CD4-positive, alpha-beta memory T cell (primary cell): ENCODE measurements at regions of chrX and their contacts with region 1.

Region 1: GRCh38 chrX:129726307-129727111 is 12.3 kb upstream of the XPNPEP2 start:
- DNase-seq: peak in 2 of 5 donors; percentile 18 to 24
- H3K4me3 ChIP-seq: no peak overlapping the region
- H3K4me3 Mint-ChIP-seq: no peak overlapping the region
- H3K27ac ChIP-seq: no peak overlapping the region
- H3K27ac Mint-ChIP-seq: peak overlapping the region in 2 of 7 donors; percentile 50 to 73
- H3K4me1 ChIP-seq: peaks cover 26% of the 10 kb centered on the region
- H3K4me1 Mint-ChIP-seq: peaks cover 27 to 46% (median 34%) of the 10 kb centered on the region in 4 donors
- H3K27me3 ChIP-seq: no peaks in the 10 kb centered on the region
- H3K27me3 Mint-ChIP-seq: no peaks in the 10 kb centered on the region

Region 2: GRCh38 chrX:129577473-129577872 is 149.0 kb before region 1 on chrX:
- CTCF ChIA-PET with region 1: no interaction called
- POLR2A ChIA-PET with region 1: no interaction called
- intact Hi-C with region 1: no loop called
- DNase-seq: no peak
- H3K4me3 ChIP-seq: no peak overlapping the region
- H3K4me3 Mint-ChIP-seq: no peak overlapping the region
- H3K27ac ChIP-seq: no peak overlapping the region
- H3K27ac Mint-ChIP-seq: no peak overlapping the region
- H3K4me1 ChIP-seq: no peaks in the 10 kb centered on the region
- H3K4me1 Mint-ChIP-seq: no peaks in the 10 kb centered on the region
- H3K27me3 ChIP-seq: no peaks in the 10 kb centered on the region
- H3K27me3 Mint-ChIP-seq: no peaks in the 10 kb centered on the region

Region 3: GRCh38 chrX:129606918-129607317 is 119.6 kb before region 1 on chrX:
- CTCF ChIA-PET with region 1: interaction called, 12 read pairs
- POLR2A ChIA-PET with region 1: no interaction called
- intact Hi-C with region 1: loop called (anchors 1 kb)
- DNase-seq: peak; percentile 48 to 65 (median 58)
- H3K4me3 ChIP-seq: no peak overlapping the region
- H3K4me3 Mint-ChIP-seq: peak overlapping the region in 1 of 8 donors; percentile 39
- H3K27ac ChIP-seq: no peak overlapping the region
- H3K27ac Mint-ChIP-seq: peak overlapping the region in 1 of 7 donors; percentile 50
- H3K4me1 ChIP-seq: peaks cover 12% of the 10 kb centered on the region
- H3K4me1 Mint-ChIP-seq: peaks cover 2 to 25% (median 18%) of the 10 kb centered on the region in 4 donors
- H3K27me3 ChIP-seq: no peaks in the 10 kb centered on the region
- H3K27me3 Mint-ChIP-seq: no peaks in the 10 kb centered on the region

Region 4: DNA sequence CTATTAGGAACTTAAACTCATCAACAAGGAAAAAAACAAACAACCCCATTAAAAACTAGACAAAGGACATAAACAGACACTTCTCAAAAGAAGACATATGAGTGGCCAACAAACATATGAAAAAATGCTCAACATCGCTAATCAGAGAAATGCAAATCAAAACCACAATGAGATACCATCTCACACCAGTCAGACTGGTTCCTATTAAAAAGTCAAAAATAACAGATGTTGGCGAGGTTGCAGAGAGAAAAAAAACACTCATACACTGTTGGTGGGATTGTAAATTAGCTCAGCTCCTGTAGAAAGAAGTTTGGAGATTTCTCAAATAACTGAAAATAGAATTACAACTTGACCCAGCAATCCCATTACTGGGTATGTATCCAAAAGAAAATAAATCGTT is 100.5 kb before region 1 on chrX:
- CTCF ChIA-PET with region 1: no interaction called
- POLR2A ChIA-PET with region 1: no interaction called
- intact Hi-C with region 1: no loop called
- DNase-seq: no peak
- H3K4me3 ChIP-seq: no peak overlapping the region
- H3K4me3 Mint-ChIP-seq: no peak overlapping the region
- H3K27ac ChIP-seq: no peak overlapping the region
- H3K27ac Mint-ChIP-seq: no peak overlapping the region
- H3K4me1 ChIP-seq: no peaks in the 10 kb centered on the region
- H3K4me1 Mint-ChIP-seq: peaks cover 5 to 10% (median 7%) of the 10 kb centered on the region in 4 donors
- H3K27me3 ChIP-seq: no peaks in the 10 kb centered on the region
- H3K27me3 Mint-ChIP-seq: peaks cover 0 to 2% of the 10 kb centered on the region in 2 donors

Region 5: DNA sequence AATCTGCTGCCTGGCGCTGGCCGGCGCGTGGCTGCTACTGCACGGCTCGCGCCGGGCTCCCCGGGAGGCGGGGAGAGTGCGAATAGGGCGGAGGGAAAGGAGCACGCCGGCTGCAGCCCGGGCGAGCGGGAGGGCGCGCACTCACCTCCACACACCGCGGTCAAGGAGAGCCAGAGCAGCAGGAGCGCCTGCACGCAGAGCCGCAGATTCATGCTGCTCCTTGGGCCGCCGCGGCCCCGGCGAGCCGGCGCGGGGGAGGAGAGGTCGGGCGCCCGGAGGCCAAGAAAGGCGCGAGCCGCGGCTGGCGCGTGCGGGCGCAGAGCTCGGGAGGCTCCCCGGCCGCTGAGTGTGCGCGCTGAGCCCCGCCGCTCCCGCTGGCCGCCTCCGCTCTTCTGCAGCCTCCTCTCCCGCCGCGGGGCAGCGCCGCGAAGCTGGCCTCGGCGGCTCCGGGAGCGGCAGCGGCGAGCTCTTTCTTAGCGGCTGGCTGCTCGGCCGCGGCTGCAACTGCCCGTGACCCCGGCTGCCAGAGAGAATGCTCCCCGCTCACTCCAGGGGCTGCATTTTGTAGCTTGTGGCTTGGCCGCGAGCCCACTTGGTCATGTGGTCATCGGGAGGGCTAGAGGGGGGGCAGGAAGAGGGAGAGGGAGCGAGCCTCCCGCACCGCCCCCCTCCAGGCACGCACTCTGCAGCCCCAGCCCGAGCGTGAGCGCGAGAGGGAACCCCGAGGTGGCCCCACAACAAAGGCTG is 71.9 kb before region 1 on chrX and contains the start of gene APLN:
- CTCF ChIA-PET with region 1: interaction called, 9 read pairs
- POLR2A ChIA-PET with region 1: no interaction called
- intact Hi-C with region 1: loop called (anchors 5 kb)
- DNase-seq: peak in 3 of 5 donors; percentile 11 to 16 (median 14)
- H3K4me3 ChIP-seq: no peak within 1 kb of the TSS
- H3K4me3 Mint-ChIP-seq: peak within 1 kb of the TSS; percentile 53 to 76 (median 74)
- H3K27ac ChIP-seq: no peak within 1 kb of the TSS
- H3K27ac Mint-ChIP-seq: no peak within 1 kb of the TSS
- H3K4me1 ChIP-seq: peaks cover 10% of the 10 kb centered on the region
- H3K4me1 Mint-ChIP-seq: peaks cover 3 to 9% (median 6%) of the 10 kb centered on the region in 4 donors
- H3K27me3 ChIP-seq: peaks cover 4% of the 10 kb centered on the region
- H3K27me3 Mint-ChIP-seq: peaks cover 0 to 5% of the 10 kb centered on the region in 2 donors
- total RNA-seq, gene APLN: not detected

Region 6: DNA sequence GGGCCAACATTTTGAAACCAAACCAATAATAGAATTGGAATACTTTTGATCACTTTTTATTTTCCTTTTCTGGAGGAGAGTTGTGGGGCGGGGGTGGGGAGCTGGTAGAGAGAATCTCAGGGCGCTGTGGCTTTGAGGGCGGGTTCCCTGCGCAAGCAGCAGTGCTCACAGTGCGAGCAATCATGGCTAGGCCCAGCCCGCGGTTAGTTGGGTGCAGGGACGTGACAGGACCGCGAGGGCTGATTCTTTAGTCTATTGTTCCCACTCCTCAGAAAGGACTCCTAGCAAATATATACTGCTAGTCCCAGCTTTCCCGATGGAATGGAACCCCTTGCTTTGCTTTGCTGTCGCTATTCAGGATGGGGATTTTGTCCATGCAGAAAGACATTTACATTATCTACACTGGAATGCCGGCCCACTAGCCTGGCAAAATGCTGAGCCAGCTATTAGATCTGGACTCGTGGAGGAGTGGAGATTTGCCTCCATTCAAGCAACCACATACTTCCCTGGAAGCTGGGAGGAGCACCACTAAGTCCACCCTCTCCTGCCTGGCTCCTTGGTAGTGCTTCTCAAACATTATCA is 47.8 kb before region 1 on chrX:
- CTCF ChIA-PET with region 1: interaction called, 10 read pairs
- POLR2A ChIA-PET with region 1: no interaction called
- intact Hi-C with region 1: no loop called
- DNase-seq: peak in 3 of 5 donors; percentile 38 to 66 (median 41)
- H3K4me3 ChIP-seq: peak overlapping the region; percentile 11 to 60
- H3K4me3 Mint-ChIP-seq: peak overlapping the region; percentile 75 to 88 (median 78)
- H3K27ac ChIP-seq: peak overlapping the region; percentile 43
- H3K27ac Mint-ChIP-seq: peak overlapping the region; percentile 10 to 86 (median 71)
- H3K4me1 ChIP-seq: peaks cover 10% of the 10 kb centered on the region
- H3K4me1 Mint-ChIP-seq: peaks cover 1 to 20% (median 6%) of the 10 kb centered on the region in 4 donors
- H3K27me3 ChIP-seq: no peaks in the 10 kb centered on the region
- H3K27me3 Mint-ChIP-seq: no peaks in the 10 kb centered on the region

Region 7: DNA sequence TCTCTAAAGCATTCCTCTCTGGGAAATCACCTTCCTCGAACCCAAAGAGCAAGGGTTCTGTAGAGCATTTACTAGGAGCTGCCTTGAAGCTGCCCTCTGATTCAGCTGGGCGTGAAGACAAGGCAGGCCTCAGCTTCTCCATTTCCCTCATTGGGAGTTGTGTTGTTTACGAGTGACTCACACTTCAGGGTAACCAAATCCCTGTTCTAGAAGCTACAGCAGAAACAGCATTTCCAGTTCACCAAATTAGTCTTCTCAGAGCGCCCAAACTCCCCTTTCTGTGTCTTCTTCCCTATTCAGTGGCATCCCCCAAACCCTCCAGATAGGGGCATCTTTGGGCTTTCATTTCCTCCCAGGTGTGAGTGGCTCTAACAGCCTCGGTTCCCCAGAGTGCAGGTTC is 11.4 kb after region 1 on chrX:
- CTCF ChIA-PET with region 1: interaction called, 16 read pairs
- POLR2A ChIA-PET with region 1: interaction called, 3 read pairs
- intact Hi-C with region 1: no loop called
- DNase-seq: no peak
- H3K4me3 ChIP-seq: no peak overlapping the region
- H3K4me3 Mint-ChIP-seq: no peak overlapping the region
- H3K27ac ChIP-seq: no peak overlapping the region
- H3K27ac Mint-ChIP-seq: peak overlapping the region in 2 of 7 donors; percentile 8 to 15
- H3K4me1 ChIP-seq: peaks cover 29% of the 10 kb centered on the region
- H3K4me1 Mint-ChIP-seq: peaks cover 14 to 42% (median 24%) of the 10 kb centered on the region in 4 donors
- H3K27me3 ChIP-seq: no peaks in the 10 kb centered on the region
- H3K27me3 Mint-ChIP-seq: no peaks in the 10 kb centered on the region

Region 8: GRCh38 chrX:129772796-129773431 is 46.4 kb after region 1 on chrX:
- CTCF ChIA-PET with region 1: interaction called, 13 read pairs
- POLR2A ChIA-PET with region 1: interaction called, 4 read pairs
- intact Hi-C with region 1: no loop called
- DNase-seq: peak in 2 of 5 donors; percentile 31 to 69
- H3K4me3 ChIP-seq: no peak overlapping the region
- H3K4me3 Mint-ChIP-seq: peak overlapping the region in 7 of 8 donors; percentile 59 to 84 (median 72)
- H3K27ac ChIP-seq: peak overlapping the region; percentile 26
- H3K27ac Mint-ChIP-seq: peak overlapping the region; percentile 86 to 96 (median 94)
- H3K4me1 ChIP-seq: peaks cover 92% of the 10 kb centered on the region
- H3K4me1 Mint-ChIP-seq: peaks cover 45 to 92% (median 69%) of the 10 kb centered on the region in 4 donors
- H3K27me3 ChIP-seq: no peaks in the 10 kb centered on the region
- H3K27me3 Mint-ChIP-seq: no peaks in the 10 kb centered on the region